Activated CD8-positive, alpha-beta T cell treated with anti-CD3 and anti-CD28 coated beads, Interleukin-2, amount 10 ng/mL, durations not matched to agents 7 days and 5 days (primary cell): ENCODE measurements at regions of chr1 and their contacts with region 1.

Region 1: GRCh38 chr1:5992026-5992813 is at the start of gene NPHP4:
- DNase-seq: peak; percentile 100
- ATAC-seq: peak; percentile 91
- H3K4me3 Mint-ChIP-seq: peak within 1 kb of the TSS; percentile 96
- H3K27ac Mint-ChIP-seq: peak within 1 kb of the TSS; percentile 96
- H3K4me1 Mint-ChIP-seq: peaks cover 37% of the 10 kb centered on the region
- H3K27me3 Mint-ChIP-seq: no peaks in the 10 kb centered on the region
- total RNA-seq, gene NPHP4: 15.6 to 17.2 TPM

Region 2: DNA sequence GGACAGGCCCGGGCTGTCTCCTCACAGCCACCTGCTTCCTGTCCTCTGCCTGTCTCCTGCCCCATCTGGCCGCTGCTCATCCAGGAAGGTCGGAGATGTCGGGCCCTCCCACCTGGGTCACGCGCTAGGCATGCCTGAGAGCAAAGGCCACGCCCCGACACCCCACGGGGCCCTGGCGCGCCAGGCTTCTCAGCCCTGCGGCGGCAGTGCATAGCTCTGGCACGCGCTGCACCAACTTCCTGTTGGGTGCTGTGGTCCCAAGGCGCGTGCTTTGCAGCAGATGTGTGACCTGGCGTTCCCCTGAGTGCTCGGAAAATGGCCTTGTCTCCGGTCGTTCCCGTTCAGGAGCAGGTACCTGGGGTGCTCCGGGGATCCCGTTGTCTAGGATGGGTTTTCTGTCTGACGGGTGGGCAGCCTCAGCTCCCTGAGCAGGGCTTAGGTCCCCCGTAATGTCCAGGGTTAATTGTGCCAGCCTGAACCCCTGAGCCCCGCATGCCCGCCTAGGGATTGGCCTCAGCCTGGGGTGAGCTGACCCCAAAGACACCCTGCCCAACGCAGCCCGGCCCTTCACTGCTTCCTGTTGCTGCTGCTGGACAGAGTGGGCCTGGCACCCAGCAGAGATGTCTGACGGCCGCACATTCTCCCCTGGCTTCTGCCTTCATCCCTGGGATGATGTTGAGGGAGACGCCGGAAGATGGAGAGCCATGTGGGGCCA is 34.0 kb after region 1 on chr1:
- CTCF ChIA-PET with region 1: interaction called, 21 read pairs
- POLR2A ChIA-PET with region 1: interaction called, 105 read pairs
- DNase-seq: peak; percentile 96
- ATAC-seq: peak; percentile 84
- H3K4me3 Mint-ChIP-seq: peak overlapping the region; percentile 94
- H3K27ac Mint-ChIP-seq: peak overlapping the region; percentile 99
- H3K4me1 Mint-ChIP-seq: peaks cover 51% of the 10 kb centered on the region
- H3K27me3 Mint-ChIP-seq: no peaks in the 10 kb centered on the region

Region 3: GRCh38 chr1:6033986-6034749 is 41.9 kb after region 1 on chr1:
- CTCF ChIA-PET with region 1: interaction called, 13 read pairs
- POLR2A ChIA-PET with region 1: interaction called, 105 read pairs
- DNase-seq: peak; percentile 33
- ATAC-seq: peak; percentile 55
- H3K4me3 Mint-ChIP-seq: no peak overlapping the region
- H3K27ac Mint-ChIP-seq: peak overlapping the region; percentile 7
- H3K4me1 Mint-ChIP-seq: peaks cover 86% of the 10 kb centered on the region
- H3K27me3 Mint-ChIP-seq: no peaks in the 10 kb centered on the region

Region 4: DNA sequence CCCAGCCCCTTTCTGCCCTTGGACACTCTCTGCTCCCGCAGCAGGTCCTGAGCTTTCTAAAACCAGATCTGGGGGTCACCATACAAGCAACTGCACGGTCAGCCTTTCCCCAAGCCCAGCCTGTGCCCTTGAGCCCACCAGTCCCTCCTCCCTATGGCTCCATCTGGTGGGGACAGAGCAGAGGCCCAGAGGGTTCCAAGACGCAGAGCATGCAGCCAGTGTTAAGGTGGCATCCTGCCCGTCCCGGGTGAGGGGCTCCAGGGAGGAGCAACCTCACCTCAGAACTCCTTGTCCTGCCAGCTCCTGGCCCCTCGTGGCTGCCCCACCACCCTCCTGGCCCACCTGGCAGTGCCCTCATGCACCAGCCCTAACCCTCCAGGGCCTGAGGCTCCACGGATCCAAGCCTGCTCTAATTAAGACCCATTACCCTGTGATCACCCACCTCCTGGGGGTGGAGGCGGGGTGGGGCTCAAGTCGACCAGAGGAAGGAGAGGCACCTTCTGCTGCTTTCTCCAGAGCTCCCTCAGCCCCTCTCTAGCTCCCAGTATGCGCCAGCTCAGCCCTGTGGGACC is 179.4 kb after region 1 on chr1:
- CTCF ChIA-PET with region 1: no interaction called
- POLR2A ChIA-PET with region 1: no interaction called
- DNase-seq: no peak
- ATAC-seq: no peak
- H3K4me3 Mint-ChIP-seq: no peak overlapping the region
- H3K27ac Mint-ChIP-seq: no peak overlapping the region
- H3K4me1 Mint-ChIP-seq: no peaks in the 10 kb centered on the region
- H3K27me3 Mint-ChIP-seq: no peaks in the 10 kb centered on the region